ENCODE measurements at regions of chr17 and their contacts with region 1.

Region 1: GRCh38 chr17:45894022-45894784 is at the start of gene MAPT:
- DNase-seq: peak; percentile 95
- ATAC-seq: peak; percentile 97
- total RNA-seq, gene MAPT: 42.2 TPM

Region 2: DNA sequence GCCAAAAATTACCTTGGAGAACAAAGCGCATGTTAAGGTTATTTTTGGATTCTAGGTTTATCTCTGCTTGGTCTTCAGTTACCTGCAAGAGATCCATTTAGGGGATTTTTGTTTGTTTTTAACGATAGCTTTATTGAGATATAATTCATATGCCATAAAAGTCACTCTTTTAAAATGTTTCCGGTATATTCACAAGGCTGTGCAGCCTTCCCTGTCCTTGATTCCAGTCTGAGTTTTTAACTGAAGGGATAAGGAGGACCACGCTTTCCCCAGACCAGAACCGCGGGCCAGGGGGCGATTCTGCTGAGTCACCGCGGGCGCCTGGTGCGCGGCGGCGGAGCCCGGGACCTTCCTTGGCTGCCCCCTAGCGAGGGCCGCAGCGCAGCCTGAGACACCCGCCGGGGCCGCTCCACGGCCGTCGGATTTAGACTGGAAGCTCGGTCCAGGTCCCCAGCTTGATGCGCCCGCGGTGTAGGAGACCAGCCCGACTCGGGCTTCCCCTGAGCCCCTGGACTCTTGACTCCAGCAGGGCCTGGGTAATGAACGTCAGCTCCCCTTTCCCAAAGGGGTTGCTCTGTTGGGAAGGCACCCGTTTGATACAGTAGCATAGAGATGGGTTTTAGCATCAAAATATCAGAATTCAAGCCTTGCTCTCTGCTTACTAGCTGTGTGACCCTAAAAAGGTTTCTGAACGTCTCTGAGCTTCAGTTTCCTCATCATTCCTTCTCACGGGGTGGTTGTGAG is 54.9 kb after region 1 on chr17:
- intact Hi-C with region 1: loop called (anchors 10 kb)
- DNase-seq: peak; percentile 88
- ATAC-seq: peak; percentile 95

Measured in left ventricle myocardium superior (tissue), 1 donor.